Mammary epithelial cell (primary cell): ENCODE measurements at regions of chr2 and their contacts with region 1.

Region 1: GRCh38 chr2:130966775-130967490 is 126.3 kb downstream of the FAM168B start:
- DNase-seq: no peak
- H3K4me3 ChIP-seq: no peak overlapping the region
- H3K27ac ChIP-seq: no peak overlapping the region
- H3K4me1 ChIP-seq: peaks cover 4% of the 10 kb centered on the region
- H3K27me3 ChIP-seq: no peaks in the 10 kb centered on the region
- CTCF ChIP-seq: no peak

Region 2: GRCh38 chr2:130728549-130729316 is 238.2 kb before region 1 on chr2 and contains the start of gene GPR148:
- CTCF ChIA-PET with region 1: no interaction called
- dilution Hi-C with region 1: no loop called
- in situ Hi-C with region 1: no loop called
- intact Hi-C with region 1: no loop called
- DNase-seq: no peak
- H3K4me3 ChIP-seq: peak within 1 kb of the TSS in 2 of 3 experiments; percentile 61 to 63
- H3K27ac ChIP-seq: no peak within 1 kb of the TSS
- H3K4me1 ChIP-seq: peaks cover 20% of the 10 kb centered on the region
- H3K27me3 ChIP-seq: no peaks in the 10 kb centered on the region
- CTCF ChIP-seq: no peak
- total RNA-seq, gene GPR148: not detected

Region 3: GRCh38 chr2:130836501-130837174 is 130.3 kb before region 1 on chr2 and contains the start of gene ARHGEF4:
- CTCF ChIA-PET with region 1: no interaction called
- dilution Hi-C with region 1: no loop called
- in situ Hi-C with region 1: no loop called
- intact Hi-C with region 1: no loop called
- DNase-seq: peak; percentile 59
- H3K4me3 ChIP-seq: peak within 1 kb of the TSS; percentile 66 to 82 (median 73)
- H3K27ac ChIP-seq: peak within 1 kb of the TSS; percentile 40
- H3K4me1 ChIP-seq: peaks cover 6% of the 10 kb centered on the region
- H3K27me3 ChIP-seq: no peaks in the 10 kb centered on the region
- CTCF ChIP-seq: no peak
- total RNA-seq, gene ARHGEF4: 48.8 to 70.3 TPM

Region 4: GRCh38 chr2:131004446-131005209 is 37.7 kb after region 1 on chr2:
- CTCF ChIA-PET with region 1: no interaction called
- dilution Hi-C with region 1: loop called (anchors 5 kb)
- in situ Hi-C with region 1: no loop called
- intact Hi-C with region 1: no loop called
- DNase-seq: no peak
- H3K4me3 ChIP-seq: no peak overlapping the region
- H3K27ac ChIP-seq: no peak overlapping the region
- H3K4me1 ChIP-seq: no peaks in the 10 kb centered on the region
- H3K27me3 ChIP-seq: no peaks in the 10 kb centered on the region
- CTCF ChIP-seq: no peak

Region 5: DNA sequence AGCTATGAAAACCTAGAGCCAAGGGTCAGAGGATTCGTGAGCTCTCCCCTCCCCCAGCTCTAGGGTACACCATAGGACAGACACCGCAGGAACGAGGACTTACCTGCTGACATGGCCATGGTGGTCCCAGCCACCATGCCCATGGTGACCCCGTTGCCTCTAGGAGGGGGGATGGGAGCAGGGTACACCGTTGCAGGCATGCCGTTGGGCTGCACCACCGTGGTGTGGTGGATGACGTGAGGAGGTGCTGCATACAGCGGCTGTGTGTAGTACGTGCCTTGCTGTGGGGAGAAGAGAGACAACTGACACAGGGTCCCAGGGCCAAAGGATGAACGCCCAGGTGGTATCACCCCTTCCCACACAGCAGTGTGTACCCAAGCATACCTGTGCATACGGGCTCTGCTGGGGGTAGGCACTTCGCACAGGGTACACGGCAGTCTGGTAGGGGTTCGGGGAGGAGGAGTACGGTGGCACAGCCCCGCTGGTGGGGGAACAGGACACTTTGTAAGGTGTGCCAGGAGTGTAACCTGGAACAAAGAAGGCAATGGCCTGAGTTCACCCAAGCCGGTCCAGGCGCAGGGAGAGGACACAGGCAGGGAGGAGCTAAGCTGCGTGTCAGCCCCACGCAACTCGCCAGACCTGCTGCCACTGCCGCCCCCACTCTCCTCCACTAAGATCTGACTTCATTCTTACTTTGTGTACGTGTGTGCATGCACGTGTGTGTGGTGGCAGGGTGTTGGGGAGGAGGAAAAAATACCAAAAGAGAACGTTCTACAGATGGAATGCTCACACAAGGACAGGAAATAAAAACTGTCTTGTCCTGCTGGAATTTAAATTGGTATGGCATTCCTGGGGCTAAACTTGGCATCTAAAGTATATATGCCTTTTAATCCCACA is 88.5 kb after region 1 on chr2:
- CTCF ChIA-PET with region 1: no interaction called
- dilution Hi-C with region 1: no loop called
- in situ Hi-C with region 1: no loop called
- intact Hi-C with region 1: no loop called
- DNase-seq: no peak
- H3K4me3 ChIP-seq: no peak overlapping the region
- H3K27ac ChIP-seq: no peak overlapping the region
- H3K4me1 ChIP-seq: peaks cover 13% of the 10 kb centered on the region
- H3K27me3 ChIP-seq: no peaks in the 10 kb centered on the region
- CTCF ChIP-seq: no peak